ENCODE measurements at regions of chr2 and their contacts with region 1.

Region 1: GRCh38 chr2:56183643-56184499 is at the start of gene CCDC85A:
- DNase-seq: peak; percentile 39 to 80 (median 64)
- H3K4me3 ChIP-seq: peak within 1 kb of the TSS; percentile 63
- H3K27ac ChIP-seq: no peak within 1 kb of the TSS
- H3K4me1 ChIP-seq: peaks cover 6% of the 10 kb centered on the region
- H3K27me3 ChIP-seq: no peaks in the 10 kb centered on the region
- CTCF ChIP-seq: peak; percentile 40 to 60 (median 54)
- EP300 ChIP-seq: no peak
- POLR2A ChIP-seq: no peak
- total RNA-seq, gene CCDC85A: 0.18 to 6.8 (median 1.3) TPM

Region 2: DNA sequence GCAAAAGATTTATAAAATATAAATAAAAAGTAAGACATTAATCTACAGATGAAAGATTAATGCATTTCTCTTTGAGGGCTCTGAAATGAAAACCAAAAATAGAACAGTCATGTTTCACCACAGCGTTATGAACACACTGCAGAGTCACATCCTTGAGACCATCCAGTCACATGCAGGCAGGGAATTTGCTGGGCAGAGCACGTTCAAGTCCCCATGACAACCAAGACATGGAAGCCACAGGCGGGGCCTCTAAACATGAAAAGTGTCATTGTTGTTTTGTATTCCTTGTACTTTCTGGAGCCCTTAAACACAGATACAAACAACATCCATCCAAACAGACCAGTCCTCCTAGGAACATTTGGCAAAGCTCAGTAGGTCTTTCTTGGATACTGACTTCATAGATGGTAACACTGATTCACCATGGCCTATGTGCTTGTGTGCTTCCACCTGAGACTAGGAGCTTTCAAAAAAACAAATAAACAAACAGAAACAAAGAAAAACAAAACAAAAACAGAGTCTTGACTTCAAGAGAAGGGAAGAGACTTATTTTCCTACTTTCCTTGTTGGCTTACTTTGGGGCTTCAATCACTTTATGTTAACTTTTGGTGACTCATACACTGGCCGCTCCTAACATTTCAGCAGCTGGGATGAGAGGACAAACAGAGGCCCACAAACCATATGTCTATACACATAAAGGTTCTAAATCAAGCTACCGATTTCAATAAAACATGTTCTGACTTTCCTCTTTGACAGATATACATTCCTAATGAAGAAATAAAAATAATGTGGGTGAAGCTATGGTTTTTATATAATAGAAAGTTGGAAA is 99.5 kb before region 1 on chr2:
- intact Hi-C with region 1: no loop called
- DNase-seq: no peak
- H3K4me3 ChIP-seq: no peak overlapping the region
- H3K27ac ChIP-seq: no peak overlapping the region
- H3K4me1 ChIP-seq: no peaks in the 10 kb centered on the region
- H3K27me3 ChIP-seq: no peaks in the 10 kb centered on the region
- CTCF ChIP-seq: no peak
- EP300 ChIP-seq: no peak
- POLR2A ChIP-seq: no peak

Region 3: DNA sequence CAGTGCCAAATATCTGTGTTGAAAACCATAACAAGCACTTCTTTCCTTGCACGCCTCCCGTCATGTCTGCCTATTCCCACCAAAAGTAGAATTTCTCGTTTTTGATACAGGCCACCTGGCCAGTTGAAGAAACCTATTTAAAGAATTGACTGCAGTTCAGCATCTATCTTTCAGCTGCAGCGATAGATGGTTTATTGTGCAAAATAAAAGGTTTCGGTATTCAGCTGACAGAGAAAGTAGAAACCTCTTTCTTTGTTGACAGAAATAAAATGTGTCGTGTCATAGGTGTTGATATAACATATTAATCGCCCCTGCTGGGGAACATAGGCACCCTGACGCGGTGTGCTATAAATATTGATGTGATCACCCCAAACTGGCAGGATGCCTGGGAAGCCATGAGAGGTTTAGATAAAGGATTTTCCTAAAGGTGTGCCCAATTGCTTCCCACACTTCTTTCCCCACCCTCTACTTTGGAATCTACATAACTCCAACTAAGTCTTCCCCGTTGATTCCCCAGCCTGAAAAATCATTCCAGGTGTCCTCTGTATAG is 570.3 kb after region 1 on chr2:
- intact Hi-C with region 1: loop called in 1 of 4 experiments (anchors 10 kb)
- DNase-seq: no peak
- H3K4me3 ChIP-seq: no peak overlapping the region
- H3K27ac ChIP-seq: no peak overlapping the region
- H3K4me1 ChIP-seq: no peaks in the 10 kb centered on the region
- H3K27me3 ChIP-seq: no peaks in the 10 kb centered on the region
- CTCF ChIP-seq: no peak
- EP300 ChIP-seq: no peak
- POLR2A ChIP-seq: no peak

Region 4: DNA sequence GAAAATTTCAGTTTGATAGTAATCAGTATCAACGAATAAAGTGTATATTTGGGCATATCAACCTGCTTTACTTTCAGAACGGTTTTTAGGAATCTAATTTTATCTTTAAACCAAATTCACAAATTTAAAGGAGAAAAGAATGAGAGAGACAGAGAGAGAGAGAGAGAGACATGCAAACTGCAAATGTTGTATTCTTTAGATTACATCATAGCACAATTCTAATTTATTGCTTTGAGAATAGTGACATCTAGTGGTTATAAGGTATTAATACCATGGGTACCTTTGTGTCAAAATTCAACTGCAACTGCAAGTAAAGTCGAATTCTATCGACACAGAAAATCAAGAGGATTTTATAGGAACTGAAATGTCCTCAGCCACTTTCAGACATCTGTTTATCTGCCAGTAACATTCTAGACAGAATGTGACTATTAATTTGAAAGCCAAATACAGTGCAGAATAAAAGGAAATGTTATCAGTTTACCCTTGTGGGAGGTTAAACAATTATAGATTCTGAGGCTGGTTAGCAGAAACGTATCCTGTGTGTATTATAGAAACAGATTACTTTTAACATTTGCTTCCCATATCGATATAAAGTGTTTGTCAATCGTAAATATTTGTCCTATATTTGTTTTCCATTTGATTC is 1332.9 kb after region 1 on chr2:
- intact Hi-C with region 1: loop called in 1 of 4 experiments (anchors 10 kb)
- DNase-seq: no peak
- H3K4me3 ChIP-seq: no peak overlapping the region
- H3K27ac ChIP-seq: no peak overlapping the region
- H3K4me1 ChIP-seq: no peaks in the 10 kb centered on the region
- H3K27me3 ChIP-seq: no peaks in the 10 kb centered on the region
- CTCF ChIP-seq: no peak
- EP300 ChIP-seq: no peak
- POLR2A ChIP-seq: no peak

Measured in ovary (tissue), 10 donors.